ENCODE measurements at regions of chr3 and their contacts with region 1.

Region 1: DNA sequence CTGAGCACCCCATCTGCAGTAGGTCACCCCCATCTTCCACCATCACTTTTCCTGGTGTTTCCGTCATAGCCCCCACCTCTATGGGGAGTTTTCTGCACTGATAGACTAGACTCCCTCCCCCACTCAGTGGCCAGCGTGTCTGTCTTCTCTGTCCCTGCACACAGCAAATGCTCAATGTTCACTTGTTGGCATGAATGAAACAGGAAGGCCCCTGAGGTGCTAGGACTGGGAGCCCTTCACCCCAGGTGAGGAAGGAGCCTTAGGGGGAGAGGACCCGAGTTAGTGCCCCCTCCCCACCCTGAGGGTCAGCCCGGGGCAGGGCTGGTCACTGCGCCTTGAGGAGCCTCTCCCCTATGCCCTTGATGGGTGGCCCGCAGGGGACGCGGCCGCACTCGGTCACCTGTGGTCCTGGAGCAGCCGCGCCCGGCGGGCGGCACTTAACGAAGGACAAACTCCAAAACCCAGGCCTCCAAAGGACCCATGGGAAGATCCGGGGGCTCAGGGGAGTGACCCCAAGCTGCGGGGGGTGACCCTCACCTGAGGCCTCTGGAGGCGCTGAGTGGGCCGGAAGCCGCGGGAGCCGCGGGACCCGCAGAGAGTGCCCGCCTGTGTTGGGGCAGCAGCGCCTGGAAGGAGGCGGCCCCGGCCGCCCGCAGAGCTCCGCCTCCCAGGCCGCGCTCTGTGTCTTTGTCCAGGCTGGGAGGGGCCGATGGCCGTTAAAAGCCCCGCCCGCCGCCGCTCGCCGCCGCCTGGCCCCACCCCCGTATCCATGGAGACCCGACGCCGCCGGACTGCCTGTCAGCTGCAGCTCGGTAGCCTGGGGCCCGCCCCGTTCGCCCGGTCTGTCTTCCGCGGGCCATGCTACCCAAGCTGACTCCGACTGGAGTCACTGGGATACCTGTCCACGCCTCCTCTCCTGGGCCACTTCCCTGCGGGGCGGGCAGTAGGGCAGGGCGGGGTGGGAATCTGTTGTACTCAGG is 15.5 kb upstream of the FANCD2 start:
- DNase-seq: peak; percentile 96
- H3K4me3 Mint-ChIP-seq: peak overlapping the region; percentile 61
- H3K27ac Mint-ChIP-seq: no peak overlapping the region
- H3K4me1 Mint-ChIP-seq: peaks cover 16% of the 10 kb centered on the region
- H3K27me3 Mint-ChIP-seq: peaks cover 2% of the 10 kb centered on the region

Region 2: DNA sequence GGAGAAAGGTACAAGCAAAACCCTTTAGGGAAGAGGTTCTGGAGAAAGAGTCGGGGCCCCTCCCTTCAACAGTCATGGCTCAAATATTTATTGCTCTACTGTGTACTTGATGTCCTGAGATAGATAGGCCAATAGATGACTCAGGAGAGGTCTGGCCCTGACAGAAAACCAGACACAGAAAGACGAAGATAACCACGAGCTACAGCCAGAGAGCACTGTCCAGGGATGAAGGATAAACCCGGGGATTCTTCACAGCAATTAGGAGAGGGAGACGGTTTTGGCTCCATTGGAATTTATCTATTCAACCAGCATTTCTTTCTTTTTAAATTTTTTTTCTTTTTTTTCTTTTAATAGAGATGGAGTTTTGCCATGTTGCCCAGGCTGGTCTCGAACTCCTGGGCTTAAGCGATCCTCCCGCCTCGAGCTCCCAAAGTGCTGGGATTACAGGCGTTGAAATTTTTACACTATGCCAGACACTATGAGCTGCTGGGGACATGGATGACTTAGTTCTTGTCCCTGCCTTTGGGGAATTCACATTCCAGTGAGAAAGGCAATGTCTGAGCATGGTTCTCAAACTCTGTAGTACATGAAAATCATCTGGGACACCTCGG is 126.1 kb before region 1 on chr3:
- intact Hi-C with region 1: no loop called
- DNase-seq: no peak
- H3K4me3 Mint-ChIP-seq: no peak overlapping the region
- H3K27ac Mint-ChIP-seq: no peak overlapping the region
- H3K4me1 Mint-ChIP-seq: peaks cover 3% of the 10 kb centered on the region
- H3K27me3 Mint-ChIP-seq: no peaks in the 10 kb centered on the region

Region 3: DNA sequence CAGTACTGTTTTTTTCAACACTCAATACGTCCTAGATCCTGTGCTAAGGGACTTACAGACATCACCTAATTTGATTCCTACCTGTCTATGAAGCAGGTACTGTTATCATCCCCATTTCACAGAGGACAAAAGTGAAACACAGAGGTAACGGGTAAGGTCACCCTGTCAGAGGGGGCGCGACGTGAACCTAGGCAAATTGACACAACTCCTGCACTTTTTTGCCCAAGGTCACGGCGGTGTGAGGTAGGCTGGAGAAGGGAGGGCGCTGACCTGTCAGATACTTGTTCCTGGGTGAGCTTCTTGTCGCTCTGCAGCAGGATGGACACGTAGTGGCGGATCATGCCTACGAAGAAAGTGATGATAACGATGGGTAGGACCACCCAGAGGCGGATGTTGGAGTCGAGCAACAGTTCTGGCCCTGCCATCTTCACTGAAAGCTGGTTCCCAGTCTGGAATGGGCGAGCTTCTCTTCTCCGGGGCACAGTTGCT is 24.5 kb before region 1 on chr3:
- intact Hi-C with region 1: loop called (anchors 1 kb)
- DNase-seq: no peak
- H3K4me3 Mint-ChIP-seq: peak overlapping the region; percentile 97
- H3K27ac Mint-ChIP-seq: peak overlapping the region; percentile 99
- H3K4me1 Mint-ChIP-seq: peaks cover 31% of the 10 kb centered on the region
- H3K27me3 Mint-ChIP-seq: no peaks in the 10 kb centered on the region